ENCODE measurements at regions of chr15 and their contacts with region 1.

Region 1: DNA sequence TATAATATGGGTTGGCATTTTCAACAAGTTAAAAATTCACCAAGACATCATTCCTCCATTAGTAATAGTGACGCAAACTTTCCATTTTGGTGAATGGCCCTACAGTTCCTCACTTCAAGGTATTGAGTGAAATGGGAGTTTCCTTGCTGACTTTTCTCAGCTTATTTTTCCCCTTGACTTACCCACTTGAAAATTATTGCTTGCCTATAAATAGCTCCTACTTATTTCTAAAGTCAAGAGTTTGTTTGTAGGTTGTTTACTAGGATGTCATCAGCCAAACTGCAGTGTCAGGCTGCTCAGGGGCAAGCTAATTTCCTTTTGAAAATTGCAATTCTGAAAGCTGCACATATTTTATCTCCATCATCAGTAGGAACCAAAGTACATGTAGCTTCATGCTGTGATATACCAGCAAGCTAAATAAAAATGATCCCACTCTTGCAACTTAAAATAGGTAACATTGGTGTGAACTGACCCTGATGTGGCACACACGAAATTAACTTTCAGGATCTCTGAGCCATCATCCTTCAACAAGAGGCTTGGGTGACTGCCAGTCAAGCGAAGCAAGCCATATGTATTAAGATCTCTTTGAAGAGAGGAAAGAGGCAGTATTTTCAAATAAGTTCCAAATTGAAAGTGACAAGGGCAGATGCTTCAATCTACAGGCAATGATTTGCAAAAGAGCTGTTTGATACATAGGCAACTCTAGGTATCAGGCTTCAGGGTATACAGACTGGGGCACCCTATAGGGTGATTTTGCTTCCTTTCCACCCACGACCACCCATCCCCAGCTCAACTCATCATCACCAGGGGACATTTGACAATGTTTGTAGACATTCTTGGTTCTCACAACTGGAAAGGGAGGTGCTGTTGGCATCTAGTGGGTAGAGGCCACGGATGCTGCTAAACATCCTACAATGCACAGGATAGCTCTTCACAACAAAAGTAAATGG is 66.8 kb upstream of the RASGRP1 start:
- DNase-seq: peak; percentile 27
- H3K4me3 Mint-ChIP-seq: peak overlapping the region; percentile 30
- H3K27ac Mint-ChIP-seq: peak overlapping the region; percentile 85
- H3K4me1 Mint-ChIP-seq: peaks cover 50% of the 10 kb centered on the region
- H3K27me3 Mint-ChIP-seq: no peaks in the 10 kb centered on the region

Region 2: DNA sequence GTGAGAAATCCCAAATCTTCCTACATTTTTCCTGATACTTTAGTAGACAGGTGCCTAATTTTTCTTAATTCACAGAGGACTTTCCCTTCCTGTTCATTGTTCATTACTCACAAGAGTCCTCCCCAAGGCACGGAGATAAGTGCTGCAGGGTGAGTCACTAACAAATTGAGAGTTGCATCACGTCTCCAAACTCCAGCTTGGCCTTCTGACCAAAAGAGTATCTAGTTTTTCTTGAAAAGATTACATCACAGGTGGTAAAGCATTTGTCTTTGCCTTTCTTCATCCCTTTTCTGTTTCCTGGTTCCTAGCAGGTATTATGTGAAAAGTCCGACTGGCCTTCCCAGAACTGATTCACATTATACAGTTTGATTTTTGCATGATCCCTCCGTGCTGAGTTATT is 41.9 kb before region 1 on chr15:
- CTCF ChIA-PET with region 1: no interaction called
- intact Hi-C with region 1: loop called (anchors 2 kb)
- DNase-seq: peak; percentile 51
- H3K4me3 Mint-ChIP-seq: no peak overlapping the region
- H3K27ac Mint-ChIP-seq: no peak overlapping the region
- H3K4me1 Mint-ChIP-seq: peaks cover 33% of the 10 kb centered on the region
- H3K27me3 Mint-ChIP-seq: no peaks in the 10 kb centered on the region

Region 3: GRCh38 chr15:38647683-38648082 is 16.3 kb after region 1 on chr15:
- CTCF ChIA-PET with region 1: interaction called, 8 read pairs
- intact Hi-C with region 1: loop called (anchors 2 kb)
- DNase-seq: no peak
- H3K4me3 Mint-ChIP-seq: no peak overlapping the region
- H3K27ac Mint-ChIP-seq: no peak overlapping the region
- H3K4me1 Mint-ChIP-seq: peaks cover 68% of the 10 kb centered on the region
- H3K27me3 Mint-ChIP-seq: no peaks in the 10 kb centered on the region

Region 4: DNA sequence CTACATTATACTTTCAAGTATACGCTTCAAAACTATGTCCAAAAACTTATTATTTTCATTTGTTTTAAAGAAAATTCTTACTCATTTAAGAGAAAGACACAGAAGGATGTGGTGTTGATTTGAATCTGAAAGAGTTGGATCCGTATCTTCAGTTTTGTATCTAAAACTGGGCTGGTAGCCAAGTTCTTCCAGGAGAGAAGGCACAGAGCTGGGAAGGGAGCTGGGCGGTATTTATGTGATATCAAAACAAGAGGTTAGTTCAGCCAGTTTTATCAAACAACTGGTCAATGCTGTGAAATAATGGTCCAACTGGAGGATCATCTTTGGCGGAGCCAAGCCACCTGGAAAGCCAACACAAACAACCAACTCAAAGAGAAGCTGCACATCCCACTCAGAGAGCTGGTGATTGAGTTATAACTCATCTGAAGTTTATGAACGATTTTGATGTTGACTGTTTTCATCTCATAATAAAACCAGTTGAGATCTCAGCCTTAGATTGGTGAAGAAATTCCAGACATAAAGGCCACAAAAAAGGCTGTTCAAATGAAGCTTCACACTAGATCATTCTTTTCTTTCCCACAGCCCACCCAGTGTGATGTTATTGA is 422.8 kb after region 1 on chr15:
- CTCF ChIA-PET with region 1: no interaction called
- intact Hi-C with region 1: no loop called
- DNase-seq: no peak
- H3K4me3 Mint-ChIP-seq: no peak overlapping the region
- H3K27ac Mint-ChIP-seq: no peak overlapping the region
- H3K4me1 Mint-ChIP-seq: no peaks in the 10 kb centered on the region
- H3K27me3 Mint-ChIP-seq: peaks cover 2% of the 10 kb centered on the region